ENCODE measurements at regions of chr1 and their contacts with region 1.

Region 1: DNA sequence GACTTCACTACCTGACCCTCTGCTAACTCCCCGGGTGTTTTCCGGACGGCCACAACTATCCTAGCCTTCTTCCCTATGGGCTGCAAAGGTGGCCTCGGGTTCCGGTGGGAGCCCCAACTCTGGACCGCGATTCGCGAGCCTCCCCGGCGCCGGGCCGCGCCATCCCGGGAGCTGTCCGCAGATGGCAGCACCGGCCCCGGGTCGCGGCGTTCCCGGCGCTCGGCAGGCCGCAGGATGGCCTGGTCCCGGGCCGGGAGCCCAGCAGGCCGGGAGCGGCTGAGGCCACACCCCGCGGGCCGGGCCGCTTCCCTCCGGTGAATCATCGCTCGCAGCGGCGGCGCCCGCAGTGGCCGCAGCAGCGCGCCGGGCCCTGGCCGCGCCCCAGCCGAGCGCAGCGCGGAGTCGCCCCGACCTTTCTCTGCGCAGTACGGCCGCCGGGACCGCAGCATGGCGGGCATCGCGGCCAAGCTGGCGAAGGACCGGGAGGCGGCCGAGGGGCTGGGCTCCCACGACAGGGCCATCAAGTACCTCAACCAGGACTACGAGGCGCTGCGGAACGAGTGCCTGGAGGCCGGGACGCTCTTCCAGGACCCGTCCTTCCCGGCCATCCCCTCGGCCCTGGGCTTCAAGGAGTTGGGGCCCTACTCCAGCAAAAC is at the start of gene CAPN2:
- DNase-seq: peak; percentile 94
- H3K4me3 Mint-ChIP-seq: peak within 1 kb of the TSS; percentile 77
- H3K27ac Mint-ChIP-seq: peak within 1 kb of the TSS; percentile 88
- H3K4me1 Mint-ChIP-seq: peaks cover 61% of the 10 kb centered on the region
- H3K27me3 Mint-ChIP-seq: no peaks in the 10 kb centered on the region
- CTCF ChIP-seq: peak; percentile 98
- total RNA-seq, gene CAPN2: 513 and 622 TPM in 2 replicates

Region 2: GRCh38 chr1:223621312-223621734 is 91.0 kb before region 1 on chr1:
- CTCF ChIA-PET with region 1: no interaction called
- POLR2A ChIA-PET with region 1: no interaction called
- intact Hi-C with region 1: no loop called
- DNase-seq: no peak
- H3K4me3 Mint-ChIP-seq: no peak overlapping the region
- H3K27ac Mint-ChIP-seq: no peak overlapping the region
- H3K4me1 Mint-ChIP-seq: no peaks in the 10 kb centered on the region
- H3K27me3 Mint-ChIP-seq: no peaks in the 10 kb centered on the region
- CTCF ChIP-seq: no peak

Region 3: DNA sequence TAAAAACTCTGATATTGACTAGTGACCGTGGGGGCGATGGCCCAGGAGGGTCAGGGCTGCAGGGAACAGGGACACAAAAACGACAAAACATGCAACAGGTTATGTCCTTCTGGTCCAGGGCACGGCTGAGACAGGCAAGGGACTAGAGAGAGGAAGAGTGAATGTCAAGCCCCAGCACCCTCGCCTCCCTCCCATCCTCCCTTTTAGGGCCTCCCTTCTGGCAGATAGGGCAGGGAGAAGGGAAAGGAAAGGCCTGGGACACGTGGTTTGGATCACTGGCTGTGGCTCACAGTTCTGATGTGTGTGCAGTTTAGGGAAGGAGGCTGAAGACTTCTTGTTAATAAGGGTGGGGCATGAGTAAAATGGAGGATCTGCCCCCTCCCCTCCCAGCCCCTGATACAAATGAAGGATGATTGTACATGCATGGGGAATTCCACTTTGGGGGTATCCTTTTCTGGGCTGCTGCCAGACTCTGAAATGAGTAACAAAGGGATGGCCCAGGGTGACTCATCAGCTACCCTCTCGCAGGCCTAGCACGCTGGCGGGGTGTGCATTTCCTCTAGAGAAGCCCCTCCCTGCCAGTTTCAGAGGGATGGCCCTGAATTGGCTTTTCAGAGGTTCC is 14.2 kb after region 1 on chr1:
- CTCF ChIA-PET with region 1: interaction called, 11 read pairs
- POLR2A ChIA-PET with region 1: interaction called, 77 read pairs
- intact Hi-C with region 1: loop called (anchors 1 kb)
- DNase-seq: peak; percentile 100
- H3K4me3 Mint-ChIP-seq: peak overlapping the region; percentile 32
- H3K27ac Mint-ChIP-seq: peak overlapping the region; percentile 90
- H3K4me1 Mint-ChIP-seq: peaks cover 66% of the 10 kb centered on the region
- H3K27me3 Mint-ChIP-seq: no peaks in the 10 kb centered on the region
- CTCF ChIP-seq: no peak

Measured in MCF 10A (cell line).